B cell (primary cell): ENCODE measurements at regions of chr10 and their contacts with region 1.

Region 1: DNA sequence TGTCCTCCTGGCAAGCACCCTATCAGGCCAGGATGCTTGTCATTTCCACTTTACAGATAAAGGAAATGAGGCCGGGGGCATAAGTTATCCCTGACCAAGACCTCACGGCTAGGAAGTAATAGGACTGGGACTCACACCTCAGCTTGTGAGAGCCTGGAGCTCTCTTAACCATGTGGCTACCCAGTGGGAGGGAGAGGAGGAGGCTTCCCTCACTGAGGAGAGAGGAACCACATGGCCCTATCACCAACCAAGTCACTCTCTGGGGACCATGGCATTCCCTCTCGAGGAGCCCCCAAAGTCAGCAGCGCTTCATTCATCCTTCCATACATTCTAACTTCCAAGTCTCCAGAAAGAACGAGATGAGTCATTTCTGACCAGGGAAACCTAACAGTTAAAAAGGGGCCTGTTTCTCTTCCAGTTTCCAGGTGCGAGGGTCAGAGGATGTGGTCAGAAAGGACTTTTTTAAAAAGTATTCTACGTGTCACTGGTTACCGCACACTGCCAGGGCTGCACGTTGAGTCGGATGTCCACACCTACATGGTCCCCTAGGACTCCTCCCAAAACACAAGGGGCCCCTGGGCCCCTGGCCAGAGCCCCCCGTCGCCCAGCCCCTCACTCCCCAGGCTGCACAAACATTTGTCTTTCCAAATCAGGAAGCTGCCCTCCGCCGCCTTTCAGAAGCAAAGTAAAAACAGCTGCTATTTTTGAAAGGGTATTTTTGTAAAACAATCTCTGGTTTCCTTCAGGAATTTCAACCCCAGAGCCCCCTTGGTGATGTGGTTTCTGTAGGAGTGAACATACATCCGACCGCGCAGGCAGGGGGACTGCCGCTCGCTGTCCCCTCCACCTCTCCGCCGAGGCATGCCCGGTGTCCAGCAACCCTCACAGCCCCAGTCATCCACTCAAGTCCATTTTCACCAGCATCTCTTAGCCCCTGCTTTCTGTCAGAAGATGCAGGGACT is 128.2 kb upstream of the CHST15 start:
- DNase-seq: peak; percentile 32
- ATAC-seq: peak; percentile 22
- H3K4me3 ChIP-seq: peak overlapping the region in 3 of 5 experiments; percentile 25 to 60 (median 35)
- H3K4me3 Mint-ChIP-seq: peak overlapping the region; percentile 79
- H3K27ac ChIP-seq: no peak overlapping the region
- H3K27ac Mint-ChIP-seq: peak overlapping the region; percentile 56
- H3K4me1 ChIP-seq: peaks cover 28 to 30% of the 10 kb centered on the region in 2 donors
- H3K4me1 Mint-ChIP-seq: peaks cover 33% of the 10 kb centered on the region
- H3K27me3 ChIP-seq: no peaks in the 10 kb centered on the region
- H3K27me3 Mint-ChIP-seq: no peaks in the 10 kb centered on the region
- CTCF ChIP-seq: no peak

Region 2: DNA sequence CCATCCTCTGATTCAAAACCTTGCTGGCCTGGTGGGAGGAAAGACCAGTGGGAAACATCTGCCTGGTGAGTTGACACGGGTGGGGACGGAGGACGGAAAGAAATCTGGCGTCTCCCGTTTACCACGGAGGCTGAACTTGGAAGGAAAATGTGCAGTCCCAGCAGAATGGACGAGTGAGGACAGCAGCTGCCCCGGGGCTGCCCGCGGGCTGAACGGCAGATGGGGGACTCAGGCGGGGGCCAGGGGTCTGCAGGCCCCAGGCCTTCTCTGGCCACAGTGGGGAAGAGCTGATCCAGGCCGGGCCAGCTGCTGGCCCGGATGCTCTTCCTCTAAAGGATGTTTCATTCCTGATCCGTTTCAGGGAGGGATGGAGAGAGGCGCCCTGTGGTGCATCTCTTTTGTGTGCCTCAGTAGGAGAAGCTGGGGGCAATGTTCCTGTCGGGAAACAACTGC is 19.2 kb after region 1 on chr10:
- CTCF ChIA-PET with region 1: no interaction called
- POLR2A ChIA-PET with region 1: no interaction called
- intact Hi-C with region 1: no loop called
- DNase-seq: no peak
- ATAC-seq: no peak
- H3K4me3 ChIP-seq: no peak overlapping the region
- H3K4me3 Mint-ChIP-seq: no peak overlapping the region
- H3K27ac ChIP-seq: no peak overlapping the region
- H3K27ac Mint-ChIP-seq: no peak overlapping the region
- H3K4me1 ChIP-seq: peaks cover 5 to 10% of the 10 kb centered on the region in 2 donors
- H3K4me1 Mint-ChIP-seq: peaks cover 13% of the 10 kb centered on the region
- H3K27me3 ChIP-seq: no peaks in the 10 kb centered on the region
- H3K27me3 Mint-ChIP-seq: no peaks in the 10 kb centered on the region
- CTCF ChIP-seq: no peak

Region 3: GRCh38 chr10:124285587-124286527 is 64.2 kb after region 1 on chr10:
- CTCF ChIA-PET with region 1: no interaction called
- POLR2A ChIA-PET with region 1: no interaction called
- intact Hi-C with region 1: loop called (anchors 2 kb)
- DNase-seq: peak; percentile 20
- ATAC-seq: peak; percentile 45
- H3K4me3 ChIP-seq: peak overlapping the region in 3 of 5 experiments; percentile 20 to 42 (median 36)
- H3K4me3 Mint-ChIP-seq: peak overlapping the region; percentile 67
- H3K27ac ChIP-seq: no peak overlapping the region
- H3K27ac Mint-ChIP-seq: no peak overlapping the region
- H3K4me1 ChIP-seq: peaks cover 9 to 16% of the 10 kb centered on the region in 2 donors
- H3K4me1 Mint-ChIP-seq: peaks cover 18% of the 10 kb centered on the region
- H3K27me3 ChIP-seq: no peaks in the 10 kb centered on the region
- H3K27me3 Mint-ChIP-seq: no peaks in the 10 kb centered on the region
- CTCF ChIP-seq: no peak